IMR-90 (cell line): ENCODE measurements at regions of chr5 and their contacts with region 1.

Region 1: GRCh38 chr5:147188200-147189108 is 46.4 kb upstream of the STK32A start:
- DNase-seq: peak; percentile 59
- ATAC-seq: peak; percentile 90
- H3K4me3 ChIP-seq: no peak overlapping the region
- H3K27ac ChIP-seq: no peak overlapping the region
- H3K4me1 ChIP-seq: no peaks in the 10 kb centered on the region
- H3K27me3 ChIP-seq: no peaks in the 10 kb centered on the region
- CTCF ChIP-seq: peak; percentile 79
- POLR2A ChIP-seq: no peak
- RAD21 ChIP-seq: peak; percentile 75

Region 2: DNA sequence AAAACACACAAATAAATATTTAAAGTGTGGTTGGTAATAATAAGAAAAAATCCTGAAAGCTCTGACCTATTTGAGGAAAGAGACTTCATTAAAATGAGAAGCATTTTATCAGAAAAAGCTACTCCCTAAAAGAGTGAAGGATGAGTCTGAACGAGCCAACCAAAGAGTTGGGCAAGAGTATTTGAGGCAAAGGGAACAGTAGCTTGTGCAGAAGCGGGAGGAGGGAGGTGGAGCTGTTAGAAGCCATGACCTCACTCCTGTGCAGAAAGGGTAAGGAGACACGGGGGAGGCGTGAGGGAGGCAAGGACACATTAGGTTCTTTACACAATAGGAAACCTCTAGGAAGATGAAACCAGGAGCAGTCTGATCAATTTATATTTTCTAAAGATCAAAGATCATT is 1222.7 kb before region 1 on chr5:
- CTCF ChIA-PET with region 1: no interaction called
- POLR2A ChIA-PET with region 1: no interaction called
- dilution Hi-C with region 1: no loop called
- in situ Hi-C with region 1: no loop called
- intact Hi-C with region 1: no loop called
- DNase-seq: no peak
- ATAC-seq: no peak
- H3K4me3 ChIP-seq: no peak overlapping the region
- H3K27ac ChIP-seq: no peak overlapping the region
- H3K4me1 ChIP-seq: no peaks in the 10 kb centered on the region; the same call in 1 of the 2 replicates
- H3K27me3 ChIP-seq: no peaks in the 10 kb centered on the region
- CTCF ChIP-seq: no peak
- POLR2A ChIP-seq: no peak
- RAD21 ChIP-seq: no peak

Region 3: DNA sequence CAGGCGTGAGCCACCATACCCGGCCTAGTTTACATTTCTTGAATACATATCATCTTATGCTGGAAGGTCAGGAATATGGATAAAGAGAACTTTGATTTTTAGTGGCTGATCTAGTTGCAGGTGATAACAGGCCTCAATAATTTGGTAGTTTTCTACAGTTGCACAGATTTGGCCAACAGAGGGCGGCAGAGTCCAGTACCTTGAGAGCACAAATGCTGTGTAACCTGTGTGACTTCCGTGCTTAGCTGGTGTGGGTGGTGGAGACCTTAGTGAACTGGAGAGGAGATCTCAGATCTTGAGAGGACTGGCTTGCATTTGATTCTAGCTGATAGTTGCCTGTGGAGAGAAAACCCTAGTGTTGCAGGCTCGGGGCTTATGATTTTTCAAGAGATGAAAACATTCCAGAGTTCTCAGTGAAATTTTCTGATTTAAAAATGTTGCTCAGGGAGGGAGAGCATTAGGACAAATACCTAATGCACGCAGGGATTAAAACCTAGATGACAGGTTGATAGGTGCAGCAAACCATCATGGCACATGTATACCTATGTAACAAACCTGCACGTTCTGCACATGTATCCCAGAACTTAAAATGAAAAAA is 655.1 kb before region 1 on chr5:
- CTCF ChIA-PET with region 1: interaction called, 18 read pairs
- POLR2A ChIA-PET with region 1: no interaction called
- dilution Hi-C with region 1: no loop called
- in situ Hi-C with region 1: no loop called
- intact Hi-C with region 1: loop called (anchors 1 kb)
- DNase-seq: peak; percentile 50
- ATAC-seq: peak; percentile 97
- H3K4me3 ChIP-seq: no peak overlapping the region
- H3K27ac ChIP-seq: no peak overlapping the region
- H3K4me1 ChIP-seq: no peaks in the 10 kb centered on the region
- H3K27me3 ChIP-seq: peaks cover 5% of the 10 kb centered on the region
- CTCF ChIP-seq: peak; percentile 80
- POLR2A ChIP-seq: no peak
- RAD21 ChIP-seq: peak; percentile 73

Region 4: GRCh38 chr5:146965761-146966659 is 222.4 kb before region 1 on chr5:
- CTCF ChIA-PET with region 1: interaction called, 6 read pairs
- POLR2A ChIA-PET with region 1: no interaction called
- dilution Hi-C with region 1: no loop called
- in situ Hi-C with region 1: no loop called
- intact Hi-C with region 1: loop called (anchors 2 kb)
- DNase-seq: peak; percentile 69
- ATAC-seq: peak; percentile 92
- H3K4me3 ChIP-seq: no peak overlapping the region
- H3K27ac ChIP-seq: no peak overlapping the region
- H3K4me1 ChIP-seq: no peaks in the 10 kb centered on the region
- H3K27me3 ChIP-seq: no peaks in the 10 kb centered on the region
- CTCF ChIP-seq: peak; percentile 85
- POLR2A ChIP-seq: no peak
- RAD21 ChIP-seq: peak; percentile 83

Region 5: GRCh38 chr5:147177125-147177840 is 11.2 kb before region 1 on chr5:
- CTCF ChIA-PET with region 1: interaction called, 36 read pairs
- POLR2A ChIA-PET with region 1: no interaction called
- dilution Hi-C with region 1: no loop called
- in situ Hi-C with region 1: no loop called
- intact Hi-C with region 1: no loop called
- DNase-seq: peak; percentile 50
- ATAC-seq: peak; percentile 71
- H3K4me3 ChIP-seq: no peak overlapping the region
- H3K27ac ChIP-seq: no peak overlapping the region; the same call in 1 of the 2 replicates
- H3K4me1 ChIP-seq: peaks cover 2% of the 10 kb centered on the region; the same call in 1 of the 2 replicates
- H3K27me3 ChIP-seq: no peaks in the 10 kb centered on the region
- CTCF ChIP-seq: no peak
- POLR2A ChIP-seq: no peak
- RAD21 ChIP-seq: no peak

Region 6: GRCh38 chr5:147245381-147246165 is 57.1 kb after region 1 on chr5:
- CTCF ChIA-PET with region 1: no interaction called
- POLR2A ChIA-PET with region 1: no interaction called
- dilution Hi-C with region 1: no loop called
- in situ Hi-C with region 1: no loop called
- intact Hi-C with region 1: no loop called
- DNase-seq: no peak
- ATAC-seq: no peak
- H3K4me3 ChIP-seq: no peak overlapping the region
- H3K27ac ChIP-seq: no peak overlapping the region
- H3K4me1 ChIP-seq: no peaks in the 10 kb centered on the region
- H3K27me3 ChIP-seq: no peaks in the 10 kb centered on the region
- CTCF ChIP-seq: no peak
- POLR2A ChIP-seq: no peak
- RAD21 ChIP-seq: no peak